ENCODE measurements at regions of chr6 and their contacts with region 1.

Region 1: GRCh38 chr6:88780714-88781389 is 182.6 kb downstream of the RNGTT start:
- DNase-seq: peak in 1 of 2 donors; percentile 53
- ATAC-seq: peak in 7 of 8 donors; percentile 47 to 70 (median 61)
- H3K4me3 ChIP-seq: no peak overlapping the region
- H3K27ac ChIP-seq: no peak overlapping the region
- H3K4me1 ChIP-seq: no peaks in the 10 kb centered on the region
- H3K27me3 ChIP-seq: no peaks in the 10 kb centered on the region
- CTCF ChIP-seq: peak; percentile 68 to 97 (median 89)

Region 2: DNA sequence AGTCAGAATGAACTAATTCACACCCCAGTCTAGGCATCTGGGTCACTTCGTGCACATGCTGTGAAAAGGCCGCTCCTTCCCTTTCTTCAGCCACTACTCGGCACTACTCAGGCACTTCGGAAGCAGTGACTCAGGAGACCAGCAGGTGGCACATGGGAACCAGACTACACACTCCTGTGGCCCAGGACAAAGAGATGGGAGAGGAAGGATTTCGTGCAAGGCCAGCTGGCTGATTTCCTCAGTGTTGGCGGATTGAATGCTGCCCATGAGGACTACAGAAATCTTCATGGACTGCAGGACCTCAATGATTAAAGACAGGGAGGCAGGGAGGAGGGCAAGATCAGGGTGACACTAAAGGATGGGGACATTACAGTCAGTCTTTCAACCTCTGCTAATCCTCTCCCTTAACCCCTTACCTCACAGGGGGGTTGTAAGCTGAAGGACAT is 851.0 kb before region 1 on chr6:
- intact Hi-C with region 1: loop called in 7 of 10 experiments (anchors 2 to 10 kb)
- DNase-seq: peak; percentile 68 to 82
- ATAC-seq: peak; percentile 89 to 98 (median 96)
- H3K4me3 ChIP-seq: no peak overlapping the region
- H3K27ac ChIP-seq: no peak overlapping the region
- H3K4me1 ChIP-seq: peaks cover 0 to 8% (median 0%) of the 10 kb centered on the region in 9 donors
- H3K27me3 ChIP-seq: no peaks in the 10 kb centered on the region
- CTCF ChIP-seq: peak; percentile 55 to 84 (median 80)

Region 3: GRCh38 chr6:89048985-89049384 is 268.1 kb after region 1 on chr6:
- intact Hi-C with region 1: loop called in 1 of 10 experiments (anchors 10 kb)
- DNase-seq: no peak
- ATAC-seq: peak in 1 of 8 donors; percentile 30
- H3K4me3 ChIP-seq: no peak overlapping the region
- H3K27ac ChIP-seq: peak overlapping the region in 1 of 10 donors; percentile 50
- H3K4me1 ChIP-seq: peaks cover 0 to 72% (median 12%) of the 10 kb centered on the region in 9 donors
- H3K27me3 ChIP-seq: no peaks in the 10 kb centered on the region
- CTCF ChIP-seq: no peak

Measured in heart right ventricle (tissue), 16 donors.